Prostate gland (tissue), 2 donors: ENCODE measurements at regions of chr4 and their contacts with region 1.

Region 1: DNA sequence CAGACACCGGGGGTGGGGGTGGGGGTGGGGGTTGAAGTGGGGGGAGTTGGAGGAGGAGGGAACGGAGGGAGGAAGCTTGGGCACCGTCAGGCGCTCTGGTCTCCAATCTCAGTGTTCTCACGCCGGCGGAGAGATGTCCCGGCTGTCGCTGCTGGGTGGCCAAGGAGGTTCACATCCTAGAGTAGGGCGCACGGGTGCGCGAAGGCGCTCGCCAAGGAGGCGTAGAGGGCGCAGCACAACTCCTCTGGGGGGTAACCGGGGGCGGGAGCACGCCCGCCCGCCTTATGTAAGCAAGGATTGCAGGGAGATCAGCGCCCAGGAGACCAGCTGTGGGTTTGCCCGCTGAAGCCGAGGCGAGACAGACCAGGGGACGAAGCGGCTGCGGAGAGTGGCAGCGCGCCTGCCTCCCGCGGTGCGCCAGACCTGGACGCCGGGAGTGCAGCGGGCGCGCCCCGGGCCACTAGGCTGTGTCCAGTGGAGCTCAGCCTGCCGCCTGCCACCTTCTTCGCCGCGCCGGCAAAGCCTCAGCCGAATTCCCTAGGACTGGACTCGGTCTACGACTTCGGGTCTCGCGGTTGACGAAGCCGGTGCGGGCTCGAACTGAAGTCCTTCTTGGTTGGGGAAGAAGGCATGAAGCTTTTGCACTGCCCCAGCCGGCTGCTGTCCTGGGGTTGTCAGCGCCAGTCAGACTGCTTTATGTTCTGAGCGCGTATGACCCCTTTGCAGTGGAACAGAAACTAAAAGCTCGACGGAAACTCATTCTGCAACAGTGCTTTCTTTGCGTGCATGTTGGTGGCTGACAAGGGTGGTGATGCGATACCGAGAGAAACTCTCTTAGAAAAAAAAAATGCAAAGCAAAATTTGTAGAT is 707 bp upstream of the UNC5C start:
- DNase-seq: peak; percentile 11
- H3K4me3 ChIP-seq: peak overlapping the region; percentile 40 to 47
- H3K27ac ChIP-seq: peak overlapping the region; percentile 68 to 70
- H3K4me1 ChIP-seq: no peaks in the 10 kb centered on the region
- H3K27me3 ChIP-seq: no peaks in the 10 kb centered on the region
- CTCF ChIP-seq: no peak
- POLR2A ChIP-seq: no peak

Region 2: GRCh38 chr4:95165926-95166524 is 383.5 kb before region 1 on chr4:
- intact Hi-C with region 1: loop called (anchors 2 kb)
- DNase-seq: peak; percentile 55
- H3K4me3 ChIP-seq: no peak overlapping the region
- H3K27ac ChIP-seq: no peak overlapping the region
- H3K4me1 ChIP-seq: no peaks in the 10 kb centered on the region
- H3K27me3 ChIP-seq: no peaks in the 10 kb centered on the region
- CTCF ChIP-seq: peak; percentile 39 to 77 (median 74)
- POLR2A ChIP-seq: no peak

Region 3: DNA sequence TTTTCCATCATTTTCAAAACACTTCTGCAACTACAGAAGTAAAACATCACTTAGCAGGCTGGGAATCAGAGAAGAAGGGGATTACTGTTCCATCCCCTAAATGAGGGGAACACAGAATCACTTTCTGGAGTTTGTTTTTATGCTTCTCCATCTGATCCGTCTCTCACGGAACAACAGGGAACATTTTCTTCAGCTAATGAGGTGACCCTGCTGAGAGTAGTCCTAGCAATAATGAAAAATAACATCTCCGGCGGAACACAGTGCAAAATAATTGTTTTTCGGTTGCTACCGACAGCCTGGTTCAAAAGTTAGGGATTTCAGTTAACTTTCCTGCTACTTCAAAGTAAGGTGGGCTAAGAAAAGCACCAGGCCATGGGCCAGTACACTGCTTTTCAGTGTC is 323.6 kb before region 1 on chr4:
- intact Hi-C with region 1: loop called (anchors 5 kb)
- DNase-seq: no peak
- H3K4me3 ChIP-seq: no peak overlapping the region
- H3K27ac ChIP-seq: no peak overlapping the region
- H3K4me1 ChIP-seq: no peaks in the 10 kb centered on the region
- H3K27me3 ChIP-seq: no peaks in the 10 kb centered on the region
- CTCF ChIP-seq: no peak
- POLR2A ChIP-seq: no peak

Region 4: DNA sequence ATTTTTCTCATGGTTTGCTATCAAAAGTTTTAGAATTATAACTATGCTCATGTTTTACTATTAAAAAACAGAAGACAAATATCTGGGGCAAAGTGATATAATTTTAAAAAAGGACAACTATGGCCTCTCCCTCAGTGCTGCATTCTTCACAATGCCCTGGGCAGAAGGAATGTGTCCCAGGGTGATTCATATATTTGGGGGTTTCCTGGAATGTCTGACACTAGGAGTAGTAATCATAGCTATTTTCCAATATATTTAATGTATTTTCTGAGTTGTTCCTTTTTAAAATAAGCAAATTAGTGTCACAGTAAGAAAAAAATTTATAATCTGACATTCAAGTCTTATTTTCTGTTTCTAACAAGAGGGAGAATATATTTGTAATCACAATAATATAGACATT is 282.4 kb before region 1 on chr4:
- intact Hi-C with region 1: loop called (anchors 5 kb)
- DNase-seq: no peak
- H3K4me3 ChIP-seq: no peak overlapping the region
- H3K27ac ChIP-seq: no peak overlapping the region
- H3K4me1 ChIP-seq: no peaks in the 10 kb centered on the region
- H3K27me3 ChIP-seq: no peaks in the 10 kb centered on the region
- CTCF ChIP-seq: no peak
- POLR2A ChIP-seq: no peak